CD8-positive, alpha-beta memory T cell (primary cell): ENCODE measurements at regions of chr6 and their contacts with region 1.

Region 1: DNA sequence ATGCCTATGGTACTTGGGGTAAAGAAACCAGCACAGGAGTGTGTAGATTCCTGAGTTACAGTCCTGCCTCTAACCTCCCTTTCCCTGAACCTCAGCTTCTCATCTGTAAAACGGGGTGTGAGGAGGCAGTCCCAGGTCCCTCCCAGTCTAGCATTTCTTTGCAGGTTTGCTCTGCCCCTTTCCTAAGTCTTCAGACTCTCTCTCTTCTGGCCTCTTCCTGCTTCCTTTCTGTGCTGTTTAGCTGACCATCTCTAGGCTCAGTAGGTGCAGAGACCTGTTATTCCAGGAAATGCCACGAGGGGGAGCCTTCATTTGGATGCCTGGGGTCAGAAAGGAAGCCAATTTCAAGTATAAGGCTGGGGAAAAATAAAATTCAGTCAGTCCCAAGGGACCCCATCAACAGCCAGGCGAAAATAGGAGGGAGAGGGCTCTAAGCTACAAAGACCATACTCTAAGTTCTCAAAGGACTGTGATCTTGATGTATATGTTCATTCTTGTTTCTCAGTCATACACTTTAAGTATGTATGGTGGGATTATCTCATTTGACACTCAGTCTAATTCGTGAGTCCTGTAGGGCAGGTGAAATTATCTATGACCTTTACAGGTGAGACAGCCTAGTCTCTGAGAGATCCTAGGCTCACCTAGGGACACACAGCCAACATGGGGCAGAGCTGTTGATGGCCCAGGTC is 89.1 kb downstream of the NCR2 start:
- DNase-seq: peak; percentile 57 to 81 (median 68)
- H3K4me3 ChIP-seq: no peak overlapping the region
- H3K4me3 Mint-ChIP-seq: no peak overlapping the region
- H3K27ac ChIP-seq: no peak overlapping the region
- H3K27ac Mint-ChIP-seq: no peak overlapping the region
- H3K4me1 ChIP-seq: peaks cover 21% of the 10 kb centered on the region
- H3K4me1 Mint-ChIP-seq: peaks cover 6 to 9% (median 6%) of the 10 kb centered on the region in 3 donors
- H3K27me3 ChIP-seq: peaks cover 11% of the 10 kb centered on the region
- H3K27me3 Mint-ChIP-seq: peaks cover 24 to 31% of the 10 kb centered on the region in 2 donors

Region 2: GRCh38 chr6:41591859-41592502 is 167.5 kb after region 1 on chr6:
- CTCF ChIA-PET with region 1: interaction called, 73 read pairs
- POLR2A ChIA-PET with region 1: no interaction called
- DNase-seq: peak; percentile 54 to 82 (median 68)
- H3K4me3 ChIP-seq: no peak overlapping the region
- H3K4me3 Mint-ChIP-seq: no peak overlapping the region
- H3K27ac ChIP-seq: no peak overlapping the region
- H3K27ac Mint-ChIP-seq: peak overlapping the region in 2 of 8 donors; percentile 44 to 48
- H3K4me1 ChIP-seq: no peaks in the 10 kb centered on the region
- H3K4me1 Mint-ChIP-seq: peaks cover 0 to 6% (median 0%) of the 10 kb centered on the region in 3 donors
- H3K27me3 ChIP-seq: no peaks in the 10 kb centered on the region
- H3K27me3 Mint-ChIP-seq: no peaks in the 10 kb centered on the region

Region 3: DNA sequence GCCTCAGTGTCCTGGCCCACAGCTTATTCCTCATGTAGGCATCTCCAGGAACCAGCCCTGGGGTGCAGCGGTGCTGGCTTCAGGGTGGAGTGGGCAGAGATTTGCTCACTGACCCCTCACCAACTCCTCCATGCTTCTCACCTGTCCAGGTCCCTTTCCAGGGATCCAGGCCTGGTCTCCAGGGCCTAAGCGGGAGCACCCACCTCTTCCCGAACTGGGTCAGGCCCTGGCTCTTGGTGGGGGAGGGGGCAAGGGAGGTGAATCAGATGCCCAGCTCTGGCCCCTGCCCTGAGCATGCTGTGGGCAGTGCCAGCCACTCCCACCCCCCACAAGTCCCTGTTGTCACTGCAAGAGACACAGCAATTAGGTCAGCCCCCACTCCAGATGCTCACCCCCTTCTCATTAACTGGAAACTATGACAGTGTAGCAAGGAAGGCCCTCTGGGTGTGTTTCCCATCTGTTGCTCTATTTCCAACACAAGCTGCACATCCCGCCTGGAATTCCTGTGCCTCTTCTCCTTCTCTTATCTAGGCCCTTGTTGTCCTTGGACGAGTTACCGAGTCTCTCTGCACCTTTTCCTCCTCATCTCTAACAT is 250.8 kb after region 1 on chr6:
- CTCF ChIA-PET with region 1: no interaction called
- POLR2A ChIA-PET with region 1: no interaction called
- DNase-seq: no peak
- H3K4me3 ChIP-seq: no peak overlapping the region
- H3K4me3 Mint-ChIP-seq: no peak overlapping the region
- H3K27ac ChIP-seq: no peak overlapping the region
- H3K27ac Mint-ChIP-seq: no peak overlapping the region
- H3K4me1 ChIP-seq: no peaks in the 10 kb centered on the region
- H3K4me1 Mint-ChIP-seq: no peaks in the 10 kb centered on the region
- H3K27me3 ChIP-seq: peaks cover 4% of the 10 kb centered on the region
- H3K27me3 Mint-ChIP-seq: peaks cover 14 to 63% of the 10 kb centered on the region in 2 donors